Mammary epithelial cell (primary cell): ENCODE measurements at regions of chr7 and their contacts with region 1.

Region 1: GRCh38 chr7:123367484-123368122 is 166.8 kb downstream of the IQUB start:
- DNase-seq: peak; percentile 15
- H3K4me3 ChIP-seq: no peak overlapping the region
- H3K27ac ChIP-seq: no peak overlapping the region
- H3K4me1 ChIP-seq: no peaks in the 10 kb centered on the region
- H3K27me3 ChIP-seq: no peaks in the 10 kb centered on the region
- CTCF ChIP-seq: peak; percentile 73 to 88

Region 2: GRCh38 chr7:123208793-123209192 is 158.8 kb before region 1 on chr7:
- CTCF ChIA-PET with region 1: interaction called, 16 read pairs
- dilution Hi-C with region 1: no loop called
- in situ Hi-C with region 1: no loop called
- intact Hi-C with region 1: loop called (anchors 1 kb)
- DNase-seq: no peak
- H3K4me3 ChIP-seq: no peak overlapping the region
- H3K27ac ChIP-seq: no peak overlapping the region
- H3K4me1 ChIP-seq: no peaks in the 10 kb centered on the region
- H3K27me3 ChIP-seq: no peaks in the 10 kb centered on the region
- CTCF ChIP-seq: peak in 1 of 2 donors; percentile 53

Region 3: DNA sequence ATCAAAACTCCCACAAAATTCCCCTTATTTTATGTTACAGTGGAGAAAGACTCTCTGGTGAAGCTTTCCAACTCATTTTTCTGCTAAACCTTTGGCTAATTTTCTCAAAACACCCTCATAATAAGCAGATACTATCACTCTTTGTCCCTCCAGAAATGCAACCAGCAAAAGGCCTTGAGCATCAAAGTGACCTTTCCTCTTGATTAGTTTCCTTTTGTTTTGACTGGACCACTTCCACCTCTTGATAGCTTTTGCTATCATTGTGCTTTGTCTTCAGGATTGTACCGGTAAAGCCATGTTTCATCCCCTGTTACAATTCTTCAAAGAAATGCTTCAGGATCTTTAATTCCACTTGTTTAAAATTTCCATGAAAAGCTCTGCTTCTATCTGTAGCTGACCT is 52.7 kb before region 1 on chr7:
- CTCF ChIA-PET with region 1: no interaction called
- dilution Hi-C with region 1: no loop called
- in situ Hi-C with region 1: no loop called
- intact Hi-C with region 1: no loop called
- DNase-seq: no peak
- H3K4me3 ChIP-seq: no peak overlapping the region
- H3K27ac ChIP-seq: no peak overlapping the region
- H3K4me1 ChIP-seq: no peaks in the 10 kb centered on the region
- H3K27me3 ChIP-seq: no peaks in the 10 kb centered on the region
- CTCF ChIP-seq: no peak

Region 4: DNA sequence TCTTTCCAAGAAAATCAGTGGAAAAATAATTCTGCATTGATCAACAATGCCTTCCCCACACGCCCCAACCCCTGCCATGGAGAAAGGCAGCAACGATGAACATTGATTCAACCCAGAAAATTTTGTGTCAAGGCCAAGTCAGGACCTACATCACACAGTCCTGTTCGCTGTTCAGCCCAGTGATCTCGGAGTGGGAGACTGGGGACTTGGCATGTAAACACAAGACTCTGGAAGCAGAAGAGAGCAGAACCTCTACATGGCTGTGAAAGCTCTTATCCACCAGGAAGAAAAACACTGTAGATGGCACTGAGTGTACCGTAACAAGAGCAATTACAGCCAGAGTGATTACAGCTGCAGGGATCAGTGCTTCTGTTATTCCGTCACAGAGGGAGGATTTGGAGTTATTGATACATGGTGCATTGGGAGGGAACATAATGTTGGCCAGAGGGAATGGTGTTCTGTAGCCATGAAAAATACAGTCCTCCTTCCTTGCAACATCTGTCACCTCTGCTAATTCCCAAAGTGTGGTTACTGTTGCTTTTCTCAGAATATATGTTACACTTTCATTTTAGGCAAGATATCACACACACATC is 30.2 kb after region 1 on chr7:
- CTCF ChIA-PET with region 1: no interaction called
- dilution Hi-C with region 1: no loop called
- in situ Hi-C with region 1: no loop called
- intact Hi-C with region 1: no loop called
- DNase-seq: no peak
- H3K4me3 ChIP-seq: no peak overlapping the region
- H3K27ac ChIP-seq: no peak overlapping the region
- H3K4me1 ChIP-seq: no peaks in the 10 kb centered on the region
- H3K27me3 ChIP-seq: peaks cover 2% of the 10 kb centered on the region
- CTCF ChIP-seq: no peak